AG04449 (cell line): ENCODE measurements at regions of chr18 and their contacts with region 1.

Region 1: DNA sequence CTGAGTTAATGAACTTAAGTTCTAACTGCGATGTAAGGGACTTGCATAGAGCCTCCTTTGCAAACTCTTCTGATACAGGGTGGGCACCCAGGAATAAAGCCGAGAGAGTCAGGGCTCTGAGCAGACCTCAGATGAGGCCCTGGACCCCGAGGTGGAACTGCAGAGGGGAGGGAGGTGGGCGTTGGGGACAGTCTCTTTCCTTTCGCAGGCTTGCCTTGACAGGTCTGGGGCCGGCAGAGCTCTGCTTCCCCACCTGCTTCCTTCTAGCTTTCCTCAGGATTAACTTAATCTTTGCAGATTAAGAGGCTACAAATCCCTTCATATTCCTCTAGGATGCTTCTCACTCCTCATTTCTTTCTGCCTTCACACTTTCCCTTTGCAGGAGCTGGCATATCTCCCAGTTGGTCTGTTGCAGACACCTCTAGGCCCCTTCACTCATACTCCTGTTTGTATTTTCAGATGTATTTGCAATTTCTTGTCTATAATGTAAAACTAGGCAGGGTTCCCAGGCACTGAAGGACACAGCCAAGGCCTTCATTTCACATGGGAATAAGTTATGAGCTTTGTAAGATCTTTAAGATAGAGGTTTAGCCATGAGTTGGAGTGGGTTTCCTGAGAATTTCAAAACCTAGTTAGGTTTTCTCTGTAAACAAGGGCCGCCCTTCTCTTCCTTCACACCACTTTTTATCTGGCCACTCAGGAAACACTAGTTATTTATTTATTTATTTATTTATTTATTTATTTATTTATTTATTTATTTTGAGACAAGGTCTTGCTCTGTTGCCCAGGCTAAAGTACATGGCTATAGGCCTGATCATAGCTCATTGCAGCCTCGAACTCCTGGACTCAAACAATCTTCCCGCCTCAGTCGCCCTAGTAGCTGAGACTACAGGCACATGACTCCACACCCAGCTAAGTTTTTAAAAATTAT is 70.9 kb downstream of the MTCL1 start:
- DNase-seq: no peak
- H3K4me3 ChIP-seq: no peak overlapping the region
- CTCF ChIP-seq: no peak

Region 2: DNA sequence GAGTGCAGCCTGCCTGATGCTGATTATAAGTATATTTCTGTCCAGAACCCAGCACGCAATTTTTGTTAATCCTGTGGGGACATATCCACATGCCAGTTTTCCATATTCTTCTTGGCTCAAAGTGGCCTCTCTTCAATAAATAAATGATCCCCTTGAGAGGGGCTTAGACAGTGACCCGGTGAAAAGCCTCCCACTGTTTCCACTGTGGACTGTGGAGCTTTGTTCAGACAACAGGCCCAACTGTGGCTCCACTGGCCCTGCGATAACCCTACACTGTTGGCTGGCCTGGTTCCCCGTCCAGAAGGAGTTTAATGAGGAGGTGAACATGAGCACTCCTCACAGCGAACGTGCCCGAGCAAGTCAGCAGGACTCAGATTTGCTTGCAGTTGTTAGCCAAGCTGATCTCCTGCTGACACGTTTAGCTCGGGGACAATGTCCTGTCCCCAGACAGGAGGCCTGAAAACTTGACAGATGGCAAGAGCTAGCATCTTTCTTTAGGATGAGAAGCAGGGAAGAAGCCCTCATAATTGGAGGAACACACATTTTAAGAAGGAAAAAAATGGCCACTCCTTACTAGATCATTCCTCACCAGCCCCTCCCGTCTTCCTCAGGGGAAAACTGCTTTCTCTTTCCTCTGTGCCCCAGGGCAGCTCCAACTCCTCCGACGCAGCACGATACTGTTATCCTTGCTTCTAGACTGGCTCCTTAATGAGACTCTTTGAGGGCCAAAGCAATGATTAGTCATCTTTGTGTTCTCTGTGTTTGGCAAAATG is 91.0 kb before region 1 on chr18:
- CTCF ChIA-PET with region 1: no interaction called
- POLR2A ChIA-PET with region 1: no interaction called
- DNase-seq: no peak
- H3K4me3 ChIP-seq: no peak overlapping the region
- CTCF ChIP-seq: no peak

Region 3: GRCh38 chr18:8786478-8787370 is 10.4 kb after region 1 on chr18:
- CTCF ChIA-PET with region 1: interaction called, 34 read pairs
- POLR2A ChIA-PET with region 1: no interaction called
- DNase-seq: no peak
- H3K4me3 ChIP-seq: no peak overlapping the region
- CTCF ChIP-seq: no peak